Astrocyte of the cerebellum (primary cell): ENCODE measurements at regions of chr7 and their contacts with region 1.

Region 1: DNA sequence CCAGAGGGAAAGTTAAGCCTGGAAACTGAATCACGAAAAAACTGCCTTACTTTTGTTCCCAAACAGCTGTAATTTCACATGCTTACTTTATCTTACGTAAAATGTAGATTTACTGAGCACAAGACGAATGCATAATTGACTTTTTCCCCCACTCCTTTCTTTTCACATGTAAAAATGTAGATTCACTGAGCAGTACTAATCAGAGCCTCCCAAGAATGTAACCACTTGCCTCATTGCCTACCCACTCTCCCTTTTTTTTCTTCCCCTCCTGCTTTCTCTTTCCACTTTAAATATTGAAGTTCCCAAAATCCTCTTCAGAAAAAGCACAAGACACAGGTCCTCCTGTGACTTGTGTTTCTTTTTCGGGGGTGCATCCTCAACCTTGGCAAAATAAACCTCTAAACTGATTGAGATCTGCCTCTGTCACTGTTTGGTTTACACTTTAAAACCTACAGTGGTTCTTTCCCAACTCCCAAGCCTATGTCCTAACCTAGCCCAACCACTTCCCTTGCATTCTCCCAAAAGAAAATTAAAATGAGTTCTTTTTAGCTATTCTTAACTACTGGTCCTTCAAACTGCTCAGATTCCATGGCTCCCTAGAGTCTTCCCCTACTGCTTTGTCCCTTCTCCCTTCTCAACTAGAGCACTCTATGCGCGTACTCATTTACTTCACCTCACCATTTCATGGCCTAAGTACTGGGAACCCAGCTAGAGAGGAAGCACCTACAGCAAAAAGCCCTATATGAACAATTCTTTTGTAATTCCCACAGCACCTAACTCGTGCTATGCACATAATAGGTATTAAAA is 236.6 kb upstream of the MKLN1 start:
- DNase-seq: no peak
- H3K4me3 ChIP-seq: no peak overlapping the region
- CTCF ChIP-seq: no peak

Region 2: GRCh38 chr7:131057015-131057793 is 33.9 kb before region 1 on chr7:
- in situ Hi-C with region 1: loop called (anchors 5 kb)
- DNase-seq: peak; percentile 80
- H3K4me3 ChIP-seq: no peak overlapping the region
- CTCF ChIP-seq: no peak

Region 3: GRCh38 chr7:131355921-131356777 is 265.1 kb after region 1 on chr7:
- in situ Hi-C with region 1: no loop called
- DNase-seq: no peak
- H3K4me3 ChIP-seq: no peak overlapping the region
- CTCF ChIP-seq: no peak